Mammary epithelial cell (primary cell): ENCODE measurements at regions of chr1 and their contacts with region 1.

Region 1: GRCh38 chr1:115807723-115808122 is 33.2 kb downstream of the NHLH2 start:
- DNase-seq: peak; percentile 71
- H3K4me3 ChIP-seq: no peak overlapping the region
- H3K27ac ChIP-seq: no peak overlapping the region
- H3K4me1 ChIP-seq: peaks cover 2% of the 10 kb centered on the region
- H3K27me3 ChIP-seq: no peaks in the 10 kb centered on the region
- CTCF ChIP-seq: peak; percentile 64 to 80

Region 2: DNA sequence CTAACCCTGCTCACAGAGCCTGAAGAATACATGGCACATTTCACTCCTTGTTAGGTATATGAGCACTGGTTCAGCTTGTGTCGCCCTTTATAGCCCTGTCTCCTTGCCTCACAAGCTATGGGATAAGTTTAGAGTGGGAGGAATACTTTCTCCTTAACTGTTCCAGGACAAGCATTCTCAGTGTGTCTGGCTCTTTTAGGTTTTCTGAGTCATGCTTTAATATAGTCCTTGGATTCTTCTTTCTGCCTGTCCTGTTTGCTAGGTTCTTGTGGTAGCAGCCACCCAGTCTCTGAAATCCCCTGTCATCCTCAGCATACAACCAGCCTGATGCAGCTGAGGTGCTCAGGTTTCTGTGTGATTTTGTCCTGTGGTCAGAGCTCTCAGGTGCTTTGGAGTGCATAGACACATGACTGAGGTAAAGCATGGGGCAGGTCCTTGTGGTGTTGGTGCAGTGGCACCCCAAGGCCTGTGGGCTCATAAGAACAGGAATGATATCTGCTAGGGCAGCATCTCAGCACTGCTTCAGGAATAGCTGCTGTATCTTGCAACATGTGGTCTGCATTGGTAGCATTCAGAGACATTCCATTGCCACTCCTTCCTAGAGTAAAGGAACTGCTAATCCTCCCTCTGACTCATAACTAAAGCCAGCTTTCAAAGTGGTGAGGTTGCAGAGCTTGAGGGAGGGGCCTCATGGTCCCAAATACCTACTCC is 25.0 kb before region 1 on chr1:
- CTCF ChIA-PET with region 1: no interaction called
- dilution Hi-C with region 1: no loop called
- in situ Hi-C with region 1: no loop called
- intact Hi-C with region 1: loop called (anchors 1 kb)
- DNase-seq: peak; percentile 97
- H3K4me3 ChIP-seq: no peak overlapping the region
- H3K27ac ChIP-seq: peak overlapping the region; percentile 97
- H3K4me1 ChIP-seq: peaks cover 31% of the 10 kb centered on the region
- H3K27me3 ChIP-seq: no peaks in the 10 kb centered on the region
- CTCF ChIP-seq: no peak

Region 3: DNA sequence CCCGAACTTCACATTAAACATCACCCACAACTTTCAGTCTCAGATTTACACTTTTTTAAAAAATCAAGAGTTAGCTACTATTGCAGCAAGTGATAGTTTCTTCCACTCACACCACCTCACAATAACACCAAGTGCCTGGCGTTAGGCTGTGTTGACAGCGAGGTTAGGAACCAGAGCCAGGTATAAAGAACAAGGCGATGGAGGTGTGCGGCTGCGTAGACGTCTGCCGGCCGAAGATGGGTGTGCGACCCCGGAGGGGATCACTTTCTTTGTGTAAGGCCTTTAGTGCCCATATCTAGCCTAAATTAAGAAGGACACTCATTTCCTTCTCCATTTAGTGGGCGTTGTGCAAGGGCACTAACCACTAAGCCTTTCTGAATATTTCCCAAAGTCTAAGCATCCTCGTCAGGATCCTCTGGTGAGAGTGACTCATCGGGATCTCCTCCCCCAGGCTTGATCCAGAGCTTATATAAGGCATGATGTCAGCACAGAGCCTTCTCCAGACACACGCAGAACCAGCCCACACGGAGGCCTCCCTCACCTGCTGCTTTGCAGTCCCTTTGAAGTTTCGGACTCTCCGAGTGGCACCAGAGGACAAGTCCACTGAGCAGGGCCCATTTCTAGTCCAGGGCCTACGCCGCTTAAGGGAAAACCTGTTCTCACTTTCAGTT is 21.4 kb after region 1 on chr1:
- CTCF ChIA-PET with region 1: no interaction called
- dilution Hi-C with region 1: no loop called
- in situ Hi-C with region 1: no loop called
- intact Hi-C with region 1: no loop called
- DNase-seq: peak; percentile 93
- H3K4me3 ChIP-seq: no peak overlapping the region
- H3K27ac ChIP-seq: no peak overlapping the region
- H3K4me1 ChIP-seq: peaks cover 9% of the 10 kb centered on the region
- H3K27me3 ChIP-seq: no peaks in the 10 kb centered on the region
- CTCF ChIP-seq: no peak

Region 4: DNA sequence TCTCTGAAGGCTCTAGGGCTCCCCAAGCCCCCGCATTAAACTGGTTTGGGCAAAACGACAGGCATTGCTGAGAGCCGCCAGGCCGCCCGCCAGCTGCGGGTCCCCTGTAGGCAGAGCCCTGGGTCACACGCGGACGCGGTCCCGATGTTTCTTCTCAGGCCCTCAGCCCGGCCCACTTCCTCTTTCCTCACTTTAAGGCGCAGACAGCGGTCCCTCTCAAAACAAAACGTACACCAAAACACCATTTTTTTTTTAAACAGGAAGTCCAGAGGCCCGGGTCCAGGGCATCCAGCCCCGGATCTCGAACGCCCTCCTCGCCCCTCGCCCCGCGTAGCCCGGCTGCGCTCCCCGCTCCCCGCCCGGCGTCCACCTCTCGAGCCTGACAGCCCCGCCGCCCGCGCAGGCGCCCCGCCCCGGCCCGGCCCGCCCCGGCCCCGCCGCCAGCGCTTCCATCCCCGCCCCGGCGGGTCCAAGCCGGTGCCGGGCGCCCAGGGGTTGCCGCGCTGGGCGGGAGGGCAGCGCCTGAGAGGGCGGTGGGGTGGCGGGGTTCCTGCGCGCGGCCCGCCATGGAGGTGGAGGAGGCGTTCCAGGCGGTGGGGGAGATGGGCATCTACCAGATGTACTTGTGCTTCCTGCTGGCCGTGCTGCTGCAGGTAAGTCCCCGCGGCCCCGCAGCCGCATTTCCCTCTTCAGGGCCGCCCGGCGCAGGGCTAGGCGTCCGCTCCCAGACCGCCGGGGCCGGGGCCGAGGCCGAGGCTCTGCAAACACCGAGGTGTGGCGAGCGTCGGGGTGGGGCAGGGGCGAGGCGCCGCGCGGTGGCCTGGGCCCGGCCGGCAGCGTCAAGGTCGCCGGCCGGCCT is 168.6 kb after region 1 on chr1 and contains the start of gene SLC22A15:
- CTCF ChIA-PET with region 1: interaction called, 4 read pairs
- dilution Hi-C with region 1: loop called (anchors 5 kb)
- in situ Hi-C with region 1: loop called (anchors 5 to 10 kb)
- intact Hi-C with region 1: loop called (anchors 1 kb)
- DNase-seq: peak; percentile 55
- H3K4me3 ChIP-seq: peak within 1 kb of the TSS; percentile 71 to 79 (median 74)
- H3K27ac ChIP-seq: peak within 1 kb of the TSS; percentile 90
- H3K4me1 ChIP-seq: peaks cover 22% of the 10 kb centered on the region
- H3K27me3 ChIP-seq: no peaks in the 10 kb centered on the region
- CTCF ChIP-seq: no peak
- total RNA-seq, gene SLC22A15: 43.6 to 51.2 TPM

Region 5: DNA sequence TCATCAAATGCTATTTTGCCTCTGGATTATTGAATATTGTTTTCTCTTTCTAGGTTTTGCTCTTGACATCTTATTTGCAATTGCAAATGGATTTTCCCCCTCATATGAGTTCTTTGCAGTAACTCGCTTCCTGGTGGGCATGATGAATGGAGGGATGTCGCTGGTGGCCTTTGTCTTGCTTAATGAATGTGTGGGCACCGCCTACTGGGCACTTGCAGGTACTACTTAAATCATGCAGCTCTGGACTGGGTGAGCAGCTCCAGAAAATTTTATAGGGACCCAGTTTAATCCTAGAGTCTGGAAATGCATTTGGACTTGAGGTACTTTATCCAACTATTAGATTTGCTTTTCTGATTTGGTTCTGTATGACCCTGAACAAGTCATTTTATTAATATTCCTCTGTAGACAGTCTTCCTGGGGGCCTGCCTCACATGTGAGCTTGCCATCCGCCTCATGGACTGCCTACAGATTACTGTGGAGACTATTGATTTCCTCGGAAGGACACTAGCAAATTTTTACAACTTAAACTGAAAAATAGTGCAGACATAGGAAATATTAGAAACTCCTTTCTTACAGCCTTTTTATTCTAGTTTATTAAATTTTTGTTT is 213.0 kb after region 1 on chr1:
- CTCF ChIA-PET with region 1: no interaction called
- dilution Hi-C with region 1: no loop called
- in situ Hi-C with region 1: no loop called
- intact Hi-C with region 1: loop called (anchors 1 kb)
- DNase-seq: peak; percentile 39
- H3K4me3 ChIP-seq: no peak overlapping the region
- H3K27ac ChIP-seq: no peak overlapping the region
- H3K4me1 ChIP-seq: no peaks in the 10 kb centered on the region
- H3K27me3 ChIP-seq: no peaks in the 10 kb centered on the region
- CTCF ChIP-seq: peak; percentile 71 to 72